Activated naive CD4-positive, alpha-beta T cell treated with anti-CD3 and anti-CD28 coated beads for 36 hours (primary cell): ENCODE measurements at regions of chr10 and their contacts with region 1.

Region 1: GRCh38 chr10:70578371-70578947 is 24.1 kb downstream of the PRF1 start:
- DNase-seq: peak; percentile 88
- H3K4me3 Mint-ChIP-seq: no peak overlapping the region
- H3K27ac Mint-ChIP-seq: peak overlapping the region; percentile 57
- H3K4me1 Mint-ChIP-seq: peaks cover 37% of the 10 kb centered on the region
- H3K27me3 Mint-ChIP-seq: no peaks in the 10 kb centered on the region

Region 2: DNA sequence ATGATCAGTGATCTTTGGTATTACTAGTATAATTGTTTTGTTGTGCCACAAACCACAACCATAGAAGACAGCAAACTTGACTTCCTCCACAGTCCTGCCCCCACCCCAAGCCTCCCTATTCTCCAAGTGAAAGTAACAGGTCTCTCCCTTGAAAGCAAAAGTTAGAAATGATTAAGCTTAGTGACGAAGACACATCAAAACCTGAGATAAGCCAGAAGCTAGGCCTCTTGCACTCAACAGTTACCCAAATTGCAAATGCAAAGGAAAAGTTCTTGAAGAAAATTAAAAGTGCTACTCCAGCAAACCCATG is 415.6 kb before region 1 on chr10:
- CTCF ChIA-PET with region 1: no interaction called
- intact Hi-C with region 1: loop called (anchors 2 kb)
- DNase-seq: peak; percentile 87
- H3K4me3 Mint-ChIP-seq: peak overlapping the region; percentile 20
- H3K27ac Mint-ChIP-seq: peak overlapping the region; percentile 95
- H3K4me1 Mint-ChIP-seq: peaks cover 65% of the 10 kb centered on the region
- H3K27me3 Mint-ChIP-seq: no peaks in the 10 kb centered on the region

Region 3: DNA sequence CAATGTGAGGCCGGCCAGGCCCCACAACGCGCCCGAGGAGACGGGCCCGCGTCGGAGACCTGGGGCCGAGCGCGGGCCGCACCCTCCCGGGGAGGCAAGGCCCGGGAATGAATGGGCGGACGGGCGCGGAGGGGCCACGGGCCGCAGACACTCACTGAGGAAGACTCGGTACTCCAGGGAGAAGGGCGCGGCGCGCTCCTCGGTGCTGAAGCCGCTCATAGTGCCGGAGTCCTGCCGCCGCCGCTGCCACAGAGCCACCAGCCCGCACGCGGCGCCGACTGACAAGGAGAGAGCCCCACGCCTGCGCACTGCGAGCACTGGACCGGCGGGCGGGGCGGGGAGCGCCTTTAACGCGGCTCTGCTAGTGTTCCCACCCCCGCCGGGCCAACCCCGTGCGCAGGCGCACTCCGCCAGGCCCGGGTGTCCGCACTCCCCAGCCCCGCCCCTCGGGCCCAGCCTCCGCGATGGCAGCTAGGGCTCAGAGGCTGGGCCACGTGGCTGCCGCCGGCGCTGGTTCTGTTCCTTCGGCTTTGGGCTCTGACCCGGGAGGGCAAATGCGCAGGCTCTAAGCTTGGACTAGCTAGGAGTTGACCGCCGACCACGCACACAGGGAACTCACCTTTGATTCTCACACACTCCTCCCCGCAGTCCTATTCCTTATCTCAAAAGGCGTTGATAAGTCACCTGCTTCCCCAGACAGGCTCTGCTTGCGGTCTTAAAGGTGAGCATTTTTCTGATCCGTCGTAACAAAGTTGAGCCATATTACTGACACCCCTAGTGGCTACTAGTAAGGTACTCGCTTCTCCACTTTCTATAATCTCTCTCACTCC is 345.1 kb before region 1 on chr10 and contains the start of gene PPA1:
- CTCF ChIA-PET with region 1: no interaction called
- intact Hi-C with region 1: loop called (anchors 1 kb)
- DNase-seq: peak; percentile 99
- H3K4me3 Mint-ChIP-seq: peak within 1 kb of the TSS; percentile 87
- H3K27ac Mint-ChIP-seq: peak within 1 kb of the TSS; percentile 93
- H3K4me1 Mint-ChIP-seq: peaks cover 36% of the 10 kb centered on the region
- H3K27me3 Mint-ChIP-seq: no peaks in the 10 kb centered on the region
- total RNA-seq, gene PPA1: 392 to 408 TPM

Region 4: DNA sequence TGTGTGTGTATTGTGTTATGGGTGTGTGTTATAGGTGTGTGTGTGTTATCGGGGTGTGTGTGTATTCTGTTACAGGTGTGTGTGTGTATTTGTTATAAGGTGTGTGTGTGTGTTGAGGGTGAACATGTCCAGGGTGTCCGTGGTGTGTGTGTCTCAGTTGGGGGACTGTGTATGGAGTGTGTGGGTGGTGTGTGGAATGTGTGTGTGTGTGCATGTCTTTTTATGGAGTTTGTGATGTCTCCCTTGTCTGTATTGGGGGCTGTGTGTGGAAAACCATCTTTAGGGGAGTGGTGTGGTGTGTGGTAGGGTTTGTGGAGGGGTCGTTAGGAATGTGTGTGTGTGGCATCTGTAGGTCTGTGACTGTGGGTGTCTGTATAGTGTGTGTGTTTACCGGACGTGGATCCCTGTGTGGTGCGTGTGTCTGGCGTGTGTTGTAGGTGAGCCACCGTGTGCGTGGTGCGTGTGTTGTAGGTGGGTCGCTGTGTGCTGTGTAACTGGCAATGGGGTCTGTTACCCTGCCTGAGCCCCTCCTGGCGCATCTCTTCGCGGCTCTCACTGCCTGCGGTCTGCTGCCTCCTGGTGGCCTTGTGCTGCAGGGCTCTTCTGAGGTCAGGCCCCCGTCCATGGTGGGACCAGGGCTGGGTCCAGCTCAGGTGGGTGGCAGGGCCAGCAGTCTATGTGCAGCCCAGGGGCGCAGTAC is 38.2 kb before region 1 on chr10:
- CTCF ChIA-PET with region 1: no interaction called
- intact Hi-C with region 1: no loop called
- DNase-seq: peak; percentile 27
- H3K4me3 Mint-ChIP-seq: no peak overlapping the region
- H3K27ac Mint-ChIP-seq: no peak overlapping the region
- H3K4me1 Mint-ChIP-seq: no peaks in the 10 kb centered on the region
- H3K27me3 Mint-ChIP-seq: no peaks in the 10 kb centered on the region

Region 5: DNA sequence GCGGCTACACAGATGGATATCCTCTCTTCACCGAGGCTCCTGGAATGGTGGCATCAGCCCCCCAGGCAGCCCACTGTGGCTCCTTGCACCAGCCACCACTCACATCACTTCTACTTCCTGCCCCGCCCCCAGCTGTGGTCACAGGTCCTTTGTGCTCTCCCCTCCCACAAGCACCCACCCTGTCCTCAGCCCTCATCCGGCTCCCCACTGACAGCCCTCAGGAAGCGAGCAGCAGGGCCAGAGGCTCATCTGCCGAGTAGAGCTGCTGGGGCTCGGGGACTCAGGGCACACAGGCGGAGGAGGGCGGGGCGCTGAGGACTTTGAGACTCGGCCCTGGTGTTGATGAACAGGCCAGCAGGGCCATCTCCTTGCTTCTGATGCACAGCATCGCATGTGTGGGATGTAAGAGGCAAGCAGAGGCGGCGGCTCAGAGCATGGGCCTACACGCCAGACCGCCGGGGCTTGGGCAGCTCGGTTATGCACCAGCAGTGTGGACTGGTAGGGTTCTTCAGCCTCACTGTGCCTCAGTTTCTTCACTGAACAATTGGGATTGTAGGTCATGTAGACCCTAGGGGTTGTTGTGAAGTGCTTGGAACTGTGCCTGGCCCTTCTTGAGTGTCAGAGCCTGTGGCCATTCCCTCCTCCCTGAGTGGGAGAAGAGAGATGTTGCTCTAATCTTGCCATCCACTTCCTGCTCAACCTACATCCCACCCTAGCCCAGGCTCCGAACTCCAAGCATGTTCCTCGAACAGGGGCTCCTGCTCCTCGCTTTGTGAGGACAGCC is 24.4 kb after region 1 on chr10 and contains the start of gene PRF1:
- CTCF ChIA-PET with region 1: no interaction called
- intact Hi-C with region 1: loop called (anchors 1 kb)
- DNase-seq: peak; percentile 84
- H3K4me3 Mint-ChIP-seq: peak within 1 kb of the TSS; percentile 82
- H3K27ac Mint-ChIP-seq: peak within 1 kb of the TSS; percentile 68
- H3K4me1 Mint-ChIP-seq: peaks cover 33% of the 10 kb centered on the region
- H3K27me3 Mint-ChIP-seq: no peaks in the 10 kb centered on the region
- total RNA-seq, gene PRF1: 7.5 to 8.2 TPM

Region 6: GRCh38 chr10:70656489-70656888 is 78.0 kb after region 1 on chr10:
- CTCF ChIA-PET with region 1: interaction called, 4 read pairs
- intact Hi-C with region 1: loop called (anchors 1 kb)
- DNase-seq: peak; percentile 78
- H3K4me3 Mint-ChIP-seq: no peak overlapping the region
- H3K27ac Mint-ChIP-seq: no peak overlapping the region
- H3K4me1 Mint-ChIP-seq: peaks cover 10% of the 10 kb centered on the region
- H3K27me3 Mint-ChIP-seq: no peaks in the 10 kb centered on the region

Region 7: GRCh38 chr10:70849582-70850016 is 271.1 kb after region 1 on chr10:
- CTCF ChIA-PET with region 1: no interaction called
- intact Hi-C with region 1: loop called (anchors 1 kb)
- DNase-seq: no peak
- H3K4me3 Mint-ChIP-seq: no peak overlapping the region
- H3K27ac Mint-ChIP-seq: no peak overlapping the region
- H3K4me1 Mint-ChIP-seq: peaks cover 30% of the 10 kb centered on the region
- H3K27me3 Mint-ChIP-seq: no peaks in the 10 kb centered on the region